ENCODE measurements at regions of chr2 and their contacts with region 1.

Region 1: GRCh38 chr2:182649316-182649715 is 66.7 kb upstream of the DNAJC10 start:
- DNase-seq: no peak
- ATAC-seq: no peak
- H3K4me3 ChIP-seq: no peak overlapping the region
- H3K27ac ChIP-seq: no peak overlapping the region
- H3K4me1 ChIP-seq: no peaks in the 10 kb centered on the region
- H3K27me3 ChIP-seq: no peaks in the 10 kb centered on the region

Region 2: DNA sequence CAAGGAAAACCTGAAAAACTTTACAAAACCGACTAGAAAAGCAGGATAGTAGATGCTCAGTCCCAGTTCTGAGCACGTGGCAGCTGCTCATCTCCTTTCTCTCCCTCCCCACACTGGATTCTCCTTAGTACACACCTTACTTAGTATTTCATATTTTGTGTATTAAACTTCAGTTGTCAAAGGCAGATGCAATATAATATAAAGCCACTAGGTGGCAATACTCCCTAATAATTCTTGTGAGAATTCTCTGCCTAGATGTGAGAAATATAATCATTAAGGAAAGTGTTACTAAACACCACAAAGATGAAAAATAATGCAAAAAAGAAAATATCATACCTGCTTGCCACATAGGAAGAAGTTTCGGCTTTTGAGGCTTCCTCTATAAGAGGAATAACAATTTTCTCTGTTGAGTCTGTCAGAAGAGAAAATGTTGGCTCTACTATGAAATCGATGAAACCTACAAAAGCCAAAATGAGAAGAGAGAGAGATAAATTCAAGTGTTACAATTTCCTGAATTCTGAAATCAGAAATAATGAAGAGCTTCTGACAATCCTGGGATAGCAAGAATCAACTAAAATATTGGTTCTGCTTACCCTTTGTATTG is 463.1 kb before region 1 on chr2:
- intact Hi-C with region 1: loop called (anchors 1 to 2 kb)
- DNase-seq: no peak
- ATAC-seq: peak; percentile 80
- H3K4me3 ChIP-seq: no peak overlapping the region
- H3K27ac ChIP-seq: no peak overlapping the region
- H3K4me1 ChIP-seq: no peaks in the 10 kb centered on the region
- H3K27me3 ChIP-seq: no peaks in the 10 kb centered on the region

Measured in aorta (tissue), 5 donors.